ENCODE measurements at regions of chr1 and their contacts with region 1.

Region 1: GRCh38 chr1:174953285-174954072 is 46.3 kb upstream of the CACYBP start:
- DNase-seq: no peak
- ATAC-seq: peak; percentile 80
- H3K4me3 ChIP-seq: peak overlapping the region; percentile 59; the same call in 1 of the 2 replicates
- H3K27ac ChIP-seq: peak overlapping the region; percentile 48
- H3K4me1 ChIP-seq: peaks cover 25% of the 10 kb centered on the region
- H3K27me3 ChIP-seq: no peaks in the 10 kb centered on the region
- CTCF ChIP-seq: no peak
- EP300 ChIP-seq: peak; percentile 53 to 78; a peak in 2 of 4 replicates
- POLR2A ChIP-seq: no peak
- RAD21 ChIP-seq: no peak

Region 2: GRCh38 chr1:174713796-174714195 is 239.7 kb before region 1 on chr1:
- CTCF ChIA-PET with region 1: no interaction called
- POLR2A ChIA-PET with region 1: no interaction called
- RAD21 ChIA-PET with region 1: no interaction called
- SMC1A ChIA-PET with region 1: no interaction called
- in situ Hi-C with region 1: no loop called
- intact Hi-C with region 1: no loop called
- DNase-seq: no peak
- ATAC-seq: no peak
- H3K4me3 ChIP-seq: no peak overlapping the region
- H3K27ac ChIP-seq: no peak overlapping the region
- H3K4me1 ChIP-seq: no peaks in the 10 kb centered on the region
- H3K27me3 ChIP-seq: no peaks in the 10 kb centered on the region
- CTCF ChIP-seq: no peak
- EP300 ChIP-seq: no peak
- POLR2A ChIP-seq: no peak
- RAD21 ChIP-seq: no peak

Region 3: DNA sequence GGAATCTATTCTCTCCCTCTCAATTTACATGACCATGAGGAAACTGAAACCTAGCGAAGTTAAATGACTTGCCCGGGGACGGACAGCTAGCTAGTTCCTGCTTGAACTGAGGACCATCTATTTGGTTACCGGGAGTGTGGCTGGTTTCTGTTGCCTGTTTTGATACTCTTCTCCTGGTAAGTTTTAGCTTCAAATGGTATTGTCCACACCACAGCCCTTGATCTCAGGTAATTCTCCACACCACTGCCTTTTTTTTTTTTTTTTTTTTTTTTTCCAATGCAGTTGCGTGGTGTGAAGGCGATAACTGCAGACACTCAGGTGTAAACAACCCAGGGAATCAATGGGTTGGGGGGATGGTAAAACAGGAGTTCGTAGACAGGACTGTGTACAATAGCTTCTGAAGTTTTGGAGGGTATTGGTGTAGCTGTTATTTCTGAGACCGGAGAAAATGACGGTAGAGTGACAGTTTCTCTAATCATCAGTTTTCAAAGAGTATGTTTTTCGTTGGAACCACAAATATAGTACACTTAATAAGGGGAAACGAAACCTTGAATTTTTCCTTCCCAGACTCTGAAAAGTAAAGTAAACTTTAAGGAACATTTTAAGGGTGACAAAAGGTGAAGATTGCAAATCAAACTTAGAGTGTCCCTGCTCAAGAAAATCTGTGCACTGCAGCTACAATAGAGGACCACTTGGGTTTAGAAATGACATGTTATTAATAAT is 79.0 kb before region 1 on chr1:
- CTCF ChIA-PET with region 1: interaction called, 5 read pairs
- POLR2A ChIA-PET with region 1: interaction called, 5 read pairs
- RAD21 ChIA-PET with region 1: interaction called, 10 read pairs
- SMC1A ChIA-PET with region 1: interaction called, 6 read pairs
- in situ Hi-C with region 1: no loop called
- intact Hi-C with region 1: no loop called
- DNase-seq: peak; percentile 40
- ATAC-seq: peak; percentile 83
- H3K4me3 ChIP-seq: peak overlapping the region; percentile 54; the same call in 1 of the 2 replicates
- H3K27ac ChIP-seq: peak overlapping the region; percentile 47
- H3K4me1 ChIP-seq: peaks cover 25% of the 10 kb centered on the region
- H3K27me3 ChIP-seq: no peaks in the 10 kb centered on the region
- CTCF ChIP-seq: no peak
- EP300 ChIP-seq: no peak
- POLR2A ChIP-seq: no peak
- RAD21 ChIP-seq: no peak

Region 4: GRCh38 chr1:174912264-174912663 is 41.2 kb before region 1 on chr1:
- CTCF ChIA-PET with region 1: no interaction called
- POLR2A ChIA-PET with region 1: no interaction called
- RAD21 ChIA-PET with region 1: interaction called, 5 read pairs
- SMC1A ChIA-PET with region 1: interaction called, 16 read pairs
- in situ Hi-C with region 1: no loop called
- intact Hi-C with region 1: no loop called
- DNase-seq: peak; percentile 15
- ATAC-seq: peak; percentile 73
- H3K4me3 ChIP-seq: no peak overlapping the region
- H3K27ac ChIP-seq: no peak overlapping the region; the same call in 1 of the 2 replicates
- H3K4me1 ChIP-seq: peaks cover 15% of the 10 kb centered on the region; the same call in 1 of the 2 replicates
- H3K27me3 ChIP-seq: no peaks in the 10 kb centered on the region
- CTCF ChIP-seq: no peak
- EP300 ChIP-seq: no peak; a peak in 1 of 4 replicates
- POLR2A ChIP-seq: no peak
- RAD21 ChIP-seq: no peak

Region 5: GRCh38 chr1:174982971-174983689 is 29.7 kb after region 1 on chr1:
- CTCF ChIA-PET with region 1: interaction called, 6 read pairs
- POLR2A ChIA-PET with region 1: interaction called, 3 read pairs
- RAD21 ChIA-PET with region 1: interaction called, 14 read pairs
- SMC1A ChIA-PET with region 1: interaction called, 13 read pairs
- in situ Hi-C with region 1: no loop called
- intact Hi-C with region 1: no loop called
- DNase-seq: no peak
- ATAC-seq: no peak
- H3K4me3 ChIP-seq: no peak overlapping the region
- H3K27ac ChIP-seq: no peak overlapping the region
- H3K4me1 ChIP-seq: no peaks in the 10 kb centered on the region
- H3K27me3 ChIP-seq: no peaks in the 10 kb centered on the region
- CTCF ChIP-seq: peak; percentile 44 to 49 (median 49); a peak in 5 of 6 replicates
- EP300 ChIP-seq: no peak
- POLR2A ChIP-seq: no peak
- RAD21 ChIP-seq: peak; percentile 58

Region 6: DNA sequence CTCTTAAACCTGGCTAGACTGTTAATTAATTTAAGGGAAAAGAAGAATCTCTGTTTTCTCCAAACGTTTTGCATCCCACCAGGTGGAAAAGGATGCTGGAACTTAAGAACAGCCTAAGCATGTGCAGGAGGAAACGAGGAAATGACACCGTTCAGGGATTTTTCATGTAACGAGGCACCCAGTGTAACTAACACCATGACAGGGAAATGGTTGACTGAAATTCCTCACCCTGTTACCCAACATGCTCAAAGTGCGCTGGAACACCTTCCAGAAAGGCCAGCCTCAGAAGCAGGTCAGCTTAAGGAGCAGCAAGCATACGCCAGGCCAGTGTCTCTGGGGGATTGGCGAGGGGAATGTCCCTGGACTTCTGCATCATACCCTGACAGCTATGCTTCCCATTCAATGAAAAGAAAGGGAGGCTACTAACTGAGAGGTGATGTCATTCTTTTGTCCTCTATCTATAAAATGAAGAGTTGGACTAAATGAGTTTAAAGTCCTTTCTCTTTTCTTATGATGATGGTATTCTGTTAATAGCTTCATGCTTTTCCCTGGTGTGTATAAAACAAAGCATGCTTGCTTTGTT is 135.7 kb after region 1 on chr1:
- CTCF ChIA-PET with region 1: no interaction called
- POLR2A ChIA-PET with region 1: no interaction called
- RAD21 ChIA-PET with region 1: no interaction called
- SMC1A ChIA-PET with region 1: no interaction called
- in situ Hi-C with region 1: no loop called
- intact Hi-C with region 1: no loop called
- DNase-seq: no peak
- ATAC-seq: no peak
- H3K4me3 ChIP-seq: no peak overlapping the region
- H3K27ac ChIP-seq: no peak overlapping the region
- H3K4me1 ChIP-seq: no peaks in the 10 kb centered on the region
- H3K27me3 ChIP-seq: 0 out of 4 replicates have a peak, but pooled peaks cover 0 to 2% of the 10 kb centered on the region in 2 experiments
- CTCF ChIP-seq: no peak
- EP300 ChIP-seq: no peak
- POLR2A ChIP-seq: no peak
- RAD21 ChIP-seq: no peak